CD8-positive, alpha-beta memory T cell (primary cell): ENCODE measurements at regions of chr22 and their contacts with region 1.

Region 1: GRCh38 chr22:30289134-30289979 is at the start of gene CASTOR1:
- DNase-seq: peak; percentile 83 to 91 (median 89)
- H3K4me3 ChIP-seq: peak within 1 kb of the TSS; percentile 70
- H3K4me3 Mint-ChIP-seq: peak within 1 kb of the TSS; percentile 87 to 95 (median 90)
- H3K27ac ChIP-seq: peak within 1 kb of the TSS; percentile 51
- H3K27ac Mint-ChIP-seq: peak within 1 kb of the TSS; percentile 89 to 97 (median 94)
- H3K4me1 ChIP-seq: peaks cover 33% of the 10 kb centered on the region
- H3K4me1 Mint-ChIP-seq: peaks cover 23 to 43% (median 26%) of the 10 kb centered on the region in 3 donors
- H3K27me3 ChIP-seq: no peaks in the 10 kb centered on the region
- H3K27me3 Mint-ChIP-seq: peaks cover 0 to 1% of the 10 kb centered on the region in 2 donors
- total RNA-seq, gene CASTOR1: 4.0 to 5.3 TPM

Region 2: GRCh38 chr22:30114361-30114760 is 175.0 kb before region 1 on chr22:
- CTCF ChIA-PET with region 1: interaction called, 25 read pairs
- POLR2A ChIA-PET with region 1: no interaction called
- DNase-seq: no peak
- H3K4me3 ChIP-seq: no peak overlapping the region
- H3K4me3 Mint-ChIP-seq: no peak overlapping the region
- H3K27ac ChIP-seq: no peak overlapping the region
- H3K27ac Mint-ChIP-seq: no peak overlapping the region
- H3K4me1 ChIP-seq: no peaks in the 10 kb centered on the region
- H3K4me1 Mint-ChIP-seq: no peaks in the 10 kb centered on the region
- H3K27me3 ChIP-seq: no peaks in the 10 kb centered on the region
- H3K27me3 Mint-ChIP-seq: no peaks in the 10 kb centered on the region

Region 3: GRCh38 chr22:30305519-30305905 is 16.2 kb after region 1 on chr22:
- CTCF ChIA-PET with region 1: interaction called, 98 read pairs
- POLR2A ChIA-PET with region 1: interaction called, 48 read pairs
- DNase-seq: peak in 4 of 5 donors; percentile 35 to 68 (median 60)
- H3K4me3 ChIP-seq: peak overlapping the region; percentile 61
- H3K4me3 Mint-ChIP-seq: peak overlapping the region; percentile 64 to 77 (median 69)
- H3K27ac ChIP-seq: peak overlapping the region; percentile 40
- H3K27ac Mint-ChIP-seq: peak overlapping the region; percentile 78 to 99 (median 91)
- H3K4me1 ChIP-seq: peaks cover 99% of the 10 kb centered on the region
- H3K4me1 Mint-ChIP-seq: peaks cover 94 to 100% (median 99%) of the 10 kb centered on the region in 3 donors
- H3K27me3 ChIP-seq: no peaks in the 10 kb centered on the region
- H3K27me3 Mint-ChIP-seq: no peaks in the 10 kb centered on the region

Region 4: DNA sequence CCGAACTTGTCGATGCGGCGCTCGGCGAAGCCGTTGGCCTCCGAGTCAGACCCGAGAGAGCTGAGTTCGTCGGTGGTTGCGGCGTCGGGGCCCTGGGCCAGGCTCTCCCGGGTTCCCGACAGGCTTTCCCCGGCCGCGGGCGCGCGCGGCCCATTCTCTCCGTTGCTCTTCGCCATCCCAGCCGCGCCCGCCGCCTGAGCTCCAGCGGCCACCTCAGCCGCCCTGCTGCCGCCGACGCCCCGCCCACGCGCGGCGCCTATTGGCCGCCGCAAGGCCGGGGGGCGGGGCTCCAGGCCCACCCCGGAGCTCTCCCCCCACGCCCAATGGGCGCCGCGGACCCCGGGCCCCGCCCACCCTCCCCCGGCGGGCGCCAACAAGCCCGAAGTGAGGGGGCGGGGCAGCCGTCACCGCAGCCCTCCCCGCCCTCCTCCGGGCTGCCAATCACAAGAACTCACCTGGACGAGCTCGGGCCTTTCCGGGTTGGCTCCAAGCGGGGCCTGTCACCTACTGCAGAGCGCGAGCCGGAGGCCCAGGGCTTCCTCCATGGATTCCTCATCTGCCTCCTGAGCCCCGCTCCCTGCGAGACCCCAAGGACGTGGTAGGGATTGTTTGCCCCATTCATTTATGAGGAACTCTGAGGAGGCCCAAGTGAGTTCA is 37.5 kb after region 1 on chr22 and contains the start of gene TBC1D10A:
- CTCF ChIA-PET with region 1: interaction called, 53 read pairs
- POLR2A ChIA-PET with region 1: interaction called, 45 read pairs
- DNase-seq: peak; percentile 91 to 96 (median 93)
- H3K4me3 ChIP-seq: peak within 1 kb of the TSS; percentile 86
- H3K4me3 Mint-ChIP-seq: peak within 1 kb of the TSS; percentile 86 to 95 (median 91)
- H3K27ac ChIP-seq: peak within 1 kb of the TSS; percentile 67
- H3K27ac Mint-ChIP-seq: peak within 1 kb of the TSS; percentile 87 to 95 (median 92)
- H3K4me1 ChIP-seq: peaks cover 51% of the 10 kb centered on the region
- H3K4me1 Mint-ChIP-seq: peaks cover 42 to 50% (median 50%) of the 10 kb centered on the region in 3 donors
- H3K27me3 ChIP-seq: no peaks in the 10 kb centered on the region
- H3K27me3 Mint-ChIP-seq: no peaks in the 10 kb centered on the region
- total RNA-seq, gene TBC1D10A: 14.7 to 17.3 TPM

Region 5: DNA sequence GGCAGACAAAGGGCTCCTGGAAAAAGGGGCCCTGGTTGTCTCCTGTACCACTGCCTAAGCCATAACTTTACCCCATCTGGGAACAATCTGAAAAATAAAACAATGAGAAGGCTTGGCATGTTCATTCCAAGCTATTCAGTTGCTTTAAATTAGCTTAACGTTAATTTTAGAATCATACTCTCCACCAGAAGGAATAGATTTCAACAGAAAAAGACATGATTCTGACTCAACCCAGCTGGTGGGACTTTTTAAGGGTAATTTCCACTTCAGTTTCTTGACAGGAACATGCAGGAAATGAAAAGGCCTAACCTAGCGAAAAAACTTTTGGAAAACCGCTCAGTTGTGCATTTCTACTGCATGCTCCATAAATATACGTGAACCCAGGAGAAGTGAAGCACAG is 59.5 kb after region 1 on chr22:
- CTCF ChIA-PET with region 1: interaction called, 27 read pairs
- POLR2A ChIA-PET with region 1: interaction called, 48 read pairs
- DNase-seq: no peak
- H3K4me3 ChIP-seq: no peak overlapping the region
- H3K4me3 Mint-ChIP-seq: peak overlapping the region in 2 of 7 donors; percentile 39 to 44
- H3K27ac ChIP-seq: no peak overlapping the region
- H3K27ac Mint-ChIP-seq: peak overlapping the region; percentile 38 to 91 (median 66)
- H3K4me1 ChIP-seq: peaks cover 38% of the 10 kb centered on the region
- H3K4me1 Mint-ChIP-seq: peaks cover 48 to 85% (median 82%) of the 10 kb centered on the region in 3 donors
- H3K27me3 ChIP-seq: no peaks in the 10 kb centered on the region
- H3K27me3 Mint-ChIP-seq: no peaks in the 10 kb centered on the region

Region 6: GRCh38 chr22:30386960-30387827 is 97.8 kb after region 1 on chr22 and contains the start of gene RNF215:
- CTCF ChIA-PET with region 1: interaction called, 246 read pairs
- POLR2A ChIA-PET with region 1: interaction called, 35 read pairs
- DNase-seq: peak; percentile 74 to 82 (median 79)
- H3K4me3 ChIP-seq: peak within 1 kb of the TSS; percentile 22
- H3K4me3 Mint-ChIP-seq: peak within 1 kb of the TSS; percentile 64 to 93 (median 78)
- H3K27ac ChIP-seq: no peak within 1 kb of the TSS
- H3K27ac Mint-ChIP-seq: peak within 1 kb of the TSS; percentile 13 to 96 (median 71)
- H3K4me1 ChIP-seq: peaks cover 4% of the 10 kb centered on the region
- H3K4me1 Mint-ChIP-seq: peaks cover 10 to 20% (median 12%) of the 10 kb centered on the region in 3 donors
- H3K27me3 ChIP-seq: no peaks in the 10 kb centered on the region
- H3K27me3 Mint-ChIP-seq: peaks cover 4 to 14% of the 10 kb centered on the region in 2 donors
- total RNA-seq, gene RNF215: 6.3 to 7.9 TPM